ENCODE measurements at regions of chr3 and their contacts with region 1.

Region 1: GRCh38 chr3:132034486-132035464 is at the start of gene CPNE4:
- DNase-seq: peak; percentile 77 to 89 (median 84)
- ATAC-seq: peak; percentile 100
- H3K4me3 ChIP-seq: no peak within 1 kb of the TSS
- H3K27ac ChIP-seq: no peak within 1 kb of the TSS
- H3K4me1 ChIP-seq: peaks cover 0 to 5% of the 10 kb centered on the region in 2 experiments; a peak in 1 of 5 replicates
- H3K27me3 ChIP-seq: no peaks in the 10 kb centered on the region
- CTCF ChIP-seq: peak; percentile 71 to 82 (median 72)
- EP300 ChIP-seq: no peak
- POLR2A ChIP-seq: no peak
- RAD21 ChIP-seq: peak; percentile 29 to 50; a peak in 3 of 4 replicates
- polyA plus RNA-seq, gene CPNE4: not detected

Region 2: GRCh38 chr3:131543714-131544113 is 491.1 kb before region 1 on chr3:
- CTCF ChIA-PET with region 1: no interaction called
- POLR2A ChIA-PET with region 1: interaction called, 3 read pairs
- in situ Hi-C with region 1: no loop called
- intact Hi-C with region 1: loop called (anchors 10 kb)
- DNase-seq: no peak
- ATAC-seq: no peak
- H3K4me3 ChIP-seq: no peak overlapping the region
- H3K27ac ChIP-seq: no peak overlapping the region
- H3K4me1 ChIP-seq: no peaks in the 10 kb centered on the region
- H3K27me3 ChIP-seq: no peaks in the 10 kb centered on the region
- CTCF ChIP-seq: no peak
- EP300 ChIP-seq: no peak
- POLR2A ChIP-seq: no peak
- RAD21 ChIP-seq: no peak

Region 3: GRCh38 chr3:131880948-131881347 is 153.8 kb before region 1 on chr3:
- CTCF ChIA-PET with region 1: no interaction called
- POLR2A ChIA-PET with region 1: no interaction called
- in situ Hi-C with region 1: no loop called
- intact Hi-C with region 1: no loop called
- DNase-seq: no peak
- ATAC-seq: no peak
- H3K4me3 ChIP-seq: no peak overlapping the region
- H3K27ac ChIP-seq: no peak overlapping the region
- H3K4me1 ChIP-seq: no peaks in the 10 kb centered on the region
- H3K27me3 ChIP-seq: no peaks in the 10 kb centered on the region
- CTCF ChIP-seq: no peak
- EP300 ChIP-seq: no peak
- POLR2A ChIP-seq: no peak
- RAD21 ChIP-seq: no peak

Region 4: DNA sequence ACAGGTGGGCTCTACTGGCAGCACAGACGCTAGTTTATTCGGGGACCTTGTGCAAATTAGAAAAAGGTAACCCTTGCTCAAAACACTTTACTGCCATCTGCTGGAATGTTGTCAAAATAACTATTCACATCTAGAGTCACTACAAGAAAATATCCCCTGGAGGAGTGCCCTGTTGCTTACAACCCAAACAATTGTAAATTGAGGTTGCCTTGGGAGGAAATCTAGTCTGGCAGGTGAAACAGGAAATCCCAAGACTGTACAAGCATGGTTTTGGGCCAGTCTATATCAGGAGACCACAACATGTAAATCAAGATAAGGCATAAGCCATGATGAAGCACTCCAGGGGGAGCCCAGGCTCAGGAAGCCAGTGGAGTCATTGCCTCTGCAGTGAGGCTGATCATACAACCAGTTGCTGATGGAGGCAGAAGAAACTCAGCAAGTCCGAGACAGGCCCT is 145.6 kb after region 1 on chr3:
- CTCF ChIA-PET with region 1: no interaction called
- POLR2A ChIA-PET with region 1: no interaction called
- in situ Hi-C with region 1: no loop called
- intact Hi-C with region 1: loop called (anchors 5 kb)
- DNase-seq: peak in 2 of 4 experiments; percentile 18 to 20
- ATAC-seq: peak; percentile 67; the same call in 2 of the 3 replicates
- H3K4me3 ChIP-seq: no peak overlapping the region
- H3K27ac ChIP-seq: no peak overlapping the region
- H3K4me1 ChIP-seq: no peaks in the 10 kb centered on the region
- H3K27me3 ChIP-seq: no peaks in the 10 kb centered on the region
- CTCF ChIP-seq: peak in 2 of 3 experiments; percentile 34 to 59; a peak in 4 of 6 replicates
- EP300 ChIP-seq: no peak
- POLR2A ChIP-seq: no peak
- RAD21 ChIP-seq: peak; percentile 35 to 49